Activated CD8-positive, alpha-beta T cell treated with anti-CD3 and anti-CD28 coated beads for 36 hours (primary cell): ENCODE measurements at regions of chr6 and their contacts with region 1.

Region 1: DNA sequence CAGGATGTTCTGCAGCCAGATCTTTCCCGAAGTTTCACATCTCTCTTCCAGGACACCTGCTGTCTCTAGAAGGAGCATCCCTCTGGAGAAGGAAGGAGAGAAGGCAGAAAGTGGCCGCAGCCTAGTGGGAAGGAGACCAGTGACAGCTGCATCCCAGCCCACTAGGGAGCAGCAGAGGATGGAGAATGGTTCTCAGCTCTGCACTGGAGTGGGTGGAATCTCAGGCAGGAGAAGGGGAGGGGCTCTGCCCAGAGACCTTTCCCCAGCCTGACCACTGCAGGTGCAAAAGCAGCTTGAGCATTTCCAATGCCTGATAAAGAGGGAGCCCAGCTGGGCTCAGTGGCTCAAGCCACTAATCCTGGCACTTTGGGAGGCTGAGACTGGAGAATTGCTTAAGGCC is 32.3 kb downstream of the NCR2 start:
- DNase-seq: peak; percentile 18
- ATAC-seq: no peak
- H3K4me3 Mint-ChIP-seq: no peak overlapping the region
- H3K27ac Mint-ChIP-seq: no peak overlapping the region
- H3K4me1 Mint-ChIP-seq: peaks cover 16% of the 10 kb centered on the region
- H3K27me3 Mint-ChIP-seq: peaks cover 39% of the 10 kb centered on the region
- CTCF ChIP-seq: no peak

Region 2: GRCh38 chr6:41318654-41319565 is 48.8 kb before region 1 on chr6:
- CTCF ChIA-PET with region 1: interaction called, 12 read pairs
- POLR2A ChIA-PET with region 1: no interaction called
- intact Hi-C with region 1: no loop called
- DNase-seq: peak; percentile 90
- ATAC-seq: peak; percentile 99
- H3K4me3 Mint-ChIP-seq: peak overlapping the region; percentile 52
- H3K27ac Mint-ChIP-seq: peak overlapping the region; percentile 80
- H3K4me1 Mint-ChIP-seq: peaks cover 10% of the 10 kb centered on the region
- H3K27me3 Mint-ChIP-seq: peaks cover 14% of the 10 kb centered on the region
- CTCF ChIP-seq: peak; percentile 99

Region 3: GRCh38 chr6:41334482-41335040 is 33.1 kb before region 1 on chr6:
- CTCF ChIA-PET with region 1: interaction called, 47 read pairs
- POLR2A ChIA-PET with region 1: no interaction called
- intact Hi-C with region 1: no loop called
- DNase-seq: peak; percentile 43
- ATAC-seq: no peak
- H3K4me3 Mint-ChIP-seq: peak overlapping the region; percentile 33
- H3K27ac Mint-ChIP-seq: peak overlapping the region; percentile 93
- H3K4me1 Mint-ChIP-seq: peaks cover 59% of the 10 kb centered on the region
- H3K27me3 Mint-ChIP-seq: no peaks in the 10 kb centered on the region
- CTCF ChIP-seq: peak; percentile 36

Region 4: GRCh38 chr6:41344876-41345275 is 22.8 kb before region 1 on chr6:
- CTCF ChIA-PET with region 1: interaction called, 37 read pairs
- POLR2A ChIA-PET with region 1: no interaction called
- intact Hi-C with region 1: no loop called
- DNase-seq: peak; percentile 70
- ATAC-seq: peak; percentile 99
- H3K4me3 Mint-ChIP-seq: peak overlapping the region; percentile 37
- H3K27ac Mint-ChIP-seq: peak overlapping the region; percentile 90
- H3K4me1 Mint-ChIP-seq: peaks cover 32% of the 10 kb centered on the region
- H3K27me3 Mint-ChIP-seq: no peaks in the 10 kb centered on the region
- CTCF ChIP-seq: no peak

Region 5: GRCh38 chr6:41352396-41352795 is 15.3 kb before region 1 on chr6:
- CTCF ChIA-PET with region 1: interaction called, 37 read pairs
- POLR2A ChIA-PET with region 1: no interaction called
- intact Hi-C with region 1: no loop called
- DNase-seq: no peak
- ATAC-seq: no peak
- H3K4me3 Mint-ChIP-seq: no peak overlapping the region
- H3K27ac Mint-ChIP-seq: no peak overlapping the region
- H3K4me1 Mint-ChIP-seq: no peaks in the 10 kb centered on the region
- H3K27me3 Mint-ChIP-seq: peaks cover 1% of the 10 kb centered on the region
- CTCF ChIP-seq: no peak

Region 6: DNA sequence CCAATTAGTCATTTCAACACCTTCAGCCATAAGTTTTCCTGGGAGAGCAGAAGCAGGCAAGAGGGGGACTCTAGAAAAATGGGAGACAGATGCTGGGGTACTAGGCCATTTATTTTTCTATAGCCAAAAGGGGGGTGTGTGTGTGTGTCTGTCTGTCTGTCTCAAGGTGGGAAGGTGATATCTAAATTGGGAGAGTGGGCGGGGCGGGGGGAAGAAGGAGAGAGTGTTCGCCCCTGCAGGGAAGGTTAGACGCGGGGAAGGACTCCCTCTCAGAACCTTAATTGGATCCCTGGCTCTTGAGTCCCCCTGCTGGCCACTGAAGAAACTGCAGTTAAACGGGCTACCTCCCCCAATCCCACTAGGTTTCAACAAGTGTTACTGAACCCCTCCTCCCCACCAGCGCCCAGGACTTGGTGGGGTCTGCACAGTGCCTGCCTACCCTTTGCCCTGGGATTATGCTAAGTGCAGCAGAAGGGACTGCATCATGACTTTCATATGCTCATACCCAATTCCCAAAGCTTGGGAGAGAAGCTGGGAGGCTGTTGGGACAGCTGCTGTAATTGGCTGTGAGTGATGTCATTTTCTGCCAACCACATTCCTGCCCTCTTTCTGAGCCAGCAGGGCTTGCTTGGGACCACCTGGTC is 224.3 kb after region 1 on chr6:
- CTCF ChIA-PET with region 1: interaction called, 16 read pairs
- POLR2A ChIA-PET with region 1: no interaction called
- intact Hi-C with region 1: loop called (anchors 2 kb)
- DNase-seq: peak; percentile 85
- ATAC-seq: peak; percentile 97
- H3K4me3 Mint-ChIP-seq: no peak overlapping the region
- H3K27ac Mint-ChIP-seq: no peak overlapping the region
- H3K4me1 Mint-ChIP-seq: peaks cover 2% of the 10 kb centered on the region
- H3K27me3 Mint-ChIP-seq: no peaks in the 10 kb centered on the region
- CTCF ChIP-seq: peak; percentile 90

Region 7: GRCh38 chr6:41683510-41684310 is 316.0 kb after region 1 on chr6:
- CTCF ChIA-PET with region 1: interaction called, 40 read pairs
- POLR2A ChIA-PET with region 1: no interaction called
- intact Hi-C with region 1: loop called (anchors 5 kb)
- DNase-seq: peak; percentile 87
- ATAC-seq: peak; percentile 93
- H3K4me3 Mint-ChIP-seq: peak overlapping the region; percentile 70
- H3K27ac Mint-ChIP-seq: peak overlapping the region; percentile 68
- H3K4me1 Mint-ChIP-seq: peaks cover 5% of the 10 kb centered on the region
- H3K27me3 Mint-ChIP-seq: peaks cover 1% of the 10 kb centered on the region
- CTCF ChIP-seq: peak; percentile 86

Region 8: GRCh38 chr6:41818271-41819054 is 450.8 kb after region 1 on chr6:
- CTCF ChIA-PET with region 1: no interaction called
- POLR2A ChIA-PET with region 1: no interaction called
- intact Hi-C with region 1: no loop called
- DNase-seq: no peak
- ATAC-seq: no peak
- H3K4me3 Mint-ChIP-seq: no peak overlapping the region
- H3K27ac Mint-ChIP-seq: no peak overlapping the region
- H3K4me1 Mint-ChIP-seq: no peaks in the 10 kb centered on the region
- H3K27me3 Mint-ChIP-seq: no peaks in the 10 kb centered on the region
- CTCF ChIP-seq: no peak